GM13976 (cell line): ENCODE measurements at regions of chr20 and their contacts with region 1.

Region 1: GRCh38 chr20:24917797-24918578 is 31.1 kb upstream of the CST7 start:
- DNase-seq: peak; percentile 89
- CTCF ChIP-seq: peak; percentile 91

Region 2: DNA sequence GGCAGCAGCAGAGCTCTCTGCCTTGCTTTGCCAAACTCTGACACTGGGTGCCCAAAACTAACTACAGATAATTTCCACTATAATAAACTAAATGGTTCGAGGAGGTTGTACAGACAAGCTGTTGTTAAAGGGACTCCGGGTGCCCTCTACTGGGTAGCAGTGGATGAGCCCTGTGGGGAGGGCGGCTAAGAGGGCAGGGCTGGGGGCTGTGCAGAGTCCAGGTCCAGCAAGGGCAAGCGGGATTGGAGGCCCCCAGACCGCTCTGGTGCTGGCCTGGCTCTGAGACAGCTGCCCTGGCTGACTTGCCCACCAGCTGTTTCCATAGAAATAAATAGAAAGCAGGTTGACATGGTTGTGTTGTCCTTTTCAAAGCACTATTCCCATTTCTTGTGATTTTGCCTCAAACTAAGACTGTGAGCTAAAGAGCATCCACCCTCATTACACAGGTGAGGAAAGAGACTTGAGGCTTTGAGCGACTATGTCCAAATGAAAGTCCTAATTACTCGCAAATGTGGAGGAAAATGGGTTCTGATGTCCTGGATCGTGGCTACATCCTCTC is 136.5 kb before region 1 on chr20:
- in situ Hi-C with region 1: loop called (anchors 25 kb)
- DNase-seq: no peak
- CTCF ChIP-seq: peak; percentile 25

Region 3: DNA sequence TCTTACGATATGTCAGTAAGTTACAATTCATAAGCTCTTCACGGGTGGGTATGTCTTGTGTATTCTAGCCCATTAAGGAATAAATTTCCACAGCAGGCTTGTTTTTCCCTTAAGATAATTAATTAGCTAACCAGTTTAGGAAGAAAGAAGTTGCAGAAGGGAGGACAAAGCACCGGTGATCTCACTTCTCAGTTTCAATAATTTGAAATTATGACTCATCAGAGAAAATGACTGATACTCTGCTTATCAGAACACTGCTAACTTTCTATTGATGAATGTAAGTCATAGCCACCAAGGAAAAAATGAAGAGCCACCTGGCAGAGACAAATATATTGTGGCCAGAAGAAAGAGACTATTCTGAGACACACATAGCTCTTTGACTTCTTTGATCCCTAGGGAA is 242.5 kb after region 1 on chr20:
- in situ Hi-C with region 1: no loop called
- DNase-seq: no peak
- CTCF ChIP-seq: no peak

Region 4: DNA sequence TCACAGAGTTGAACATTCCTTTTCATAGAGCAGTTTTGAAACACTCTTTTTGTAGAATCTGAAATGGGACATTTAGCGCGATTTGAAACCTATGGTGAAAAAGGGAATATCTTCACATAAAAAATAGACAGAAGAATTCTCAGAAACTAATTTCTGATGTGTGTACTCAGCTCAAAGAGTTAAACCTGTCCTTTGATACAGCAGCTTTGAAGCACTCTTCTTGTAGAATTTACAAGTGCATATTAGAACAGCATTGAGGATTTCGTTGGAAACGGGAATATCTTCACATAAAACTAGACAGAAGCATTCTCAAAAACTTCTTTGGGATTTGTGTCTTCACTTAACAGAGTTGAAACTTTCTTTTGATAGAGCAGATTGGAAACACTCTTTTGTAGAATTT is 1429.4 kb after region 1 on chr20:
- in situ Hi-C with region 1: no loop called
- DNase-seq: no peak
- CTCF ChIP-seq: no peak